ENCODE measurements at regions of chr3 and their contacts with region 1.

Region 1: GRCh38 chr3:179929091-179929529 is 107.6 kb downstream of the PEX5L start:
- DNase-seq: peak; percentile 12
- H3K4me3 Mint-ChIP-seq: no peak overlapping the region
- H3K27ac Mint-ChIP-seq: no peak overlapping the region
- H3K4me1 Mint-ChIP-seq: no peaks in the 10 kb centered on the region
- H3K27me3 Mint-ChIP-seq: peaks cover 13% of the 10 kb centered on the region

Region 2: GRCh38 chr3:180018543-180018942 is 89.4 kb after region 1 on chr3:
- intact Hi-C with region 1: loop called (anchors 10 kb)
- DNase-seq: no peak
- H3K4me3 Mint-ChIP-seq: no peak overlapping the region
- H3K27ac Mint-ChIP-seq: no peak overlapping the region
- H3K4me1 Mint-ChIP-seq: no peaks in the 10 kb centered on the region
- H3K27me3 Mint-ChIP-seq: no peaks in the 10 kb centered on the region

Region 3: GRCh38 chr3:180036671-180037455 is 107.8 kb after region 1 on chr3 and contains the start of gene PEX5L:
- intact Hi-C with region 1: loop called (anchors 5 kb)
- DNase-seq: peak; percentile 16
- H3K4me3 Mint-ChIP-seq: peak within 1 kb of the TSS; percentile 64
- H3K27ac Mint-ChIP-seq: no peak within 1 kb of the TSS
- H3K4me1 Mint-ChIP-seq: peaks cover 5% of the 10 kb centered on the region
- H3K27me3 Mint-ChIP-seq: peaks cover 44% of the 10 kb centered on the region
- total RNA-seq, gene PEX5L: 0.17 and 0.67 TPM in 2 replicates

Region 4: DNA sequence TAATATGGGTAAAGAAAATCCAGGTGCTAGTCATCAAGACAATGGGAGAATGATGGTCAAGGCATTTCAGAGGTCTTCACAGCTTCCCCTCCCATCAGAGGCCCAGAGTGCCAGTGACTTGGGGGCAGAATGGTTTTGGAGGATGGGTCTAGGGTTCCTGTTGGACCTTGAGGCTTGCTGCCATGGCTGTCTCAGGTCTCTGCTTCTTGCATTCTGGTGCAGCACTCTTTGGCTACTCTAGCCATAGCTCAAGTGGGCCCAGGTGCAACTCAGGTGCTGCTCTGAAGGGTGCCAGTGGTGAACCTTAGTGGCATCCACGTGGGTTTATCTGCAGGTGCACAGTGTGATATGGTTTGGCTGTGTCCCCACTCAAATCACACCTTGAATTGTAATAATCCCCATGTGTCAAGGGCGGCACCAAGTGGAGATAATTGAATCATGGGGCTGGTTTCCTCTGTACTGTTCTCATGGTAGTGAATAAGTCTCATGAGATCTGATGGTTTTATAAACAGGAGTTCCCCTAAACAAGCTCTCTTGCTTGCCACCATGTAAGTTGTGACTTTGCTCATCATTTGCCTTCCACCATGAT is 156.1 kb after region 1 on chr3:
- intact Hi-C with region 1: loop called (anchors 2 kb)
- DNase-seq: no peak
- H3K4me3 Mint-ChIP-seq: no peak overlapping the region
- H3K27ac Mint-ChIP-seq: no peak overlapping the region
- H3K4me1 Mint-ChIP-seq: no peaks in the 10 kb centered on the region
- H3K27me3 Mint-ChIP-seq: no peaks in the 10 kb centered on the region

Region 5: GRCh38 chr3:180594631-180595558 is 665.8 kb after region 1 on chr3:
- intact Hi-C with region 1: loop called (anchors 1 kb)
- DNase-seq: no peak
- H3K4me3 Mint-ChIP-seq: no peak overlapping the region
- H3K27ac Mint-ChIP-seq: no peak overlapping the region
- H3K4me1 Mint-ChIP-seq: no peaks in the 10 kb centered on the region
- H3K27me3 Mint-ChIP-seq: peaks cover 23% of the 10 kb centered on the region

Measured in activated T-helper 1 cell treated with anti-CD3 and anti-CD28 coated beads, Interleukin-12 subunit alpha, Interleukin-12 subunit beta, Interleukin-2, Interleukin-4 antibody, amounts not matched to agents 30 ng/mL and 10 ng/mL and 1 ng/mL, durations not matched to agents 14 hours and 24 hours and 36 hours (primary cell).